SK-N-SH (cell line): ENCODE measurements at regions of chr17 and their contacts with region 1.

Region 1: GRCh38 chr17:58631523-58632323 is 60.1 kb downstream of the TEX14 start:
- DNase-seq: peak; percentile 88
- H3K4me3 ChIP-seq: peak overlapping the region; percentile 43 to 48
- H3K27ac ChIP-seq: peak overlapping the region; percentile 78 to 92
- H3K4me1 ChIP-seq: peaks cover 0 to 5% of the 10 kb centered on the region in 2 experiments; a peak in 1 of 4 replicates
- H3K27me3 ChIP-seq: no peaks in the 10 kb centered on the region
- CTCF ChIP-seq: peak; percentile 41
- EP300 ChIP-seq: peak; percentile 60 to 67; a peak in 3 of 4 replicates
- RAD21 ChIP-seq: peak; percentile 49

Region 2: DNA sequence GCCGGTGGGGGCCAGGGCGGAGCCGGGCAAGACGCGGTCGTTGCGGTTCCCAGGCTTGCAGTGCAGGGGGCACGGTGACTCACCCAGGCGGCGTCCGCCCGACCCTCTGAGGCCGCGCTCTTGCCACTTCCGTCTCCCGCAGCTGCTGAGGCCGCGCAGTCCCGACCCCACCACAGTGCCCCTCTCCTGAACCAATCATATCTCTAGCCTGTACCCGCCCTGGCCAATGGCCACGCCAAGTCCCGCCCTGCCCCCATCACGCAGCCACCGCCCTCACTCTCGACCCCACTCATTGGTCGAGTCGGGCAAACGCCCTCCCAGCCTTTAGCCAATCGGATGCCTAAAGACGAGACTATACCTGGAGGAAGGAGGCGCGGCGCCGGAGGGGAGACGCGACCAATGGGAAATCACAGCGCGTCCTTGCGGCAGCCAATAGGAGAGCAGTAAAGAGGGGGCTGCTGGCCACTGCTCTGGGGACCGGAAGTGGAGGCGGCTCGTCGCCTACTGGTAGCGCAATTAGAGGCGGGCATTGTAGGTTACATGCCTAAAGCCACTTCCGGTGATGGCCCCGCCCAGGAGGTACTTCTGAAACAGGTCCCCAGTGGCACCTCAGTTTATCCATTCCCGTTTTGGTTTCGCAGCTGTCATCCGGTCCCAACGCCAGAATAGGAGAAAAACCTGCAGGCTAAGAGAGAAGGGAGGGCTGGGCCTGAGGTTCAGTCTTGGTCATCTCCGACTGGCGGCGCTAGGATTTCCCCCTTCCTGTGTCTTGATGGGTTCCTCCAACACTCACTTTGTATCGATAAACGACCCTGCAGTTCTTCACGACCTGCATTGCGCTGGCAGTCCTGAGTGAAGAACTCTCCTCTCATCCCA is 113.8 kb before region 1 on chr17:
- CTCF ChIA-PET with region 1: interaction called, 8 read pairs
- POLR2A ChIA-PET with region 1: interaction called, 72 read pairs
- DNase-seq: peak; percentile 96
- H3K4me3 ChIP-seq: peak overlapping the region; percentile 87 to 95
- H3K27ac ChIP-seq: peak overlapping the region; percentile 92 to 97
- H3K4me1 ChIP-seq: peaks cover 5 to 25% of the 10 kb centered on the region in 2 experiments; a peak in 2 of 4 replicates
- H3K27me3 ChIP-seq: no peaks in the 10 kb centered on the region
- CTCF ChIP-seq: no peak
- EP300 ChIP-seq: peak; percentile 18 to 30; a peak in 2 of 4 replicates
- RAD21 ChIP-seq: no peak

Region 3: GRCh38 chr17:58556833-58557250 is 74.9 kb before region 1 on chr17:
- CTCF ChIA-PET with region 1: no interaction called
- POLR2A ChIA-PET with region 1: no interaction called
- DNase-seq: no peak
- H3K4me3 ChIP-seq: no peak overlapping the region
- H3K27ac ChIP-seq: no peak overlapping the region
- H3K4me1 ChIP-seq: no peaks in the 10 kb centered on the region
- H3K27me3 ChIP-seq: no peaks in the 10 kb centered on the region; the same call in 1 of the 2 replicates
- CTCF ChIP-seq: no peak
- EP300 ChIP-seq: no peak
- RAD21 ChIP-seq: no peak

Region 4: GRCh38 chr17:58587702-58588254 is 43.9 kb before region 1 on chr17:
- CTCF ChIA-PET with region 1: interaction called, 25 read pairs
- POLR2A ChIA-PET with region 1: interaction called, 20 read pairs
- DNase-seq: peak; percentile 88
- H3K4me3 ChIP-seq: no peak overlapping the region
- H3K27ac ChIP-seq: no peak overlapping the region
- H3K4me1 ChIP-seq: no peaks in the 10 kb centered on the region; a peak in 1 of 4 replicates
- H3K27me3 ChIP-seq: no peaks in the 10 kb centered on the region
- CTCF ChIP-seq: peak; percentile 99
- EP300 ChIP-seq: no peak
- RAD21 ChIP-seq: peak; percentile 91

Region 5: DNA sequence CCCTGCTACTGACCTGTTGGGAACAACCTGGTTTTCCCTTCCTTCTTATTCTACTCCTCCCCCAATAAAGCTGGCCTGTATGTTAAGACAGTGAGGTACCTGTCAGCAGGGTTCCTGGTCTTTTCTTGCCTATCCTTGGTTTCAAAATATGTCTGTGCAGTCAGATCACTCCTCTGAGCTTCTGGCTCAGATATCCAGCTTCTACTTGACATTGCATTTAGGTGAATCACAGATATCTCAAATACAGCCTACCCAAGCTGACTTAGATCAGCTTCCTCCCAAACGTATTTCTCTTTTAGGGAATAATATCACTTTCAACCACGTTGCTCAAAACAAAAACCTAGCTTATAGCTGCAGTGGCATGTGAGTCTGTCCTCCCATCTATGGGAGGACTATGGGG is 11.4 kb after region 1 on chr17:
- CTCF ChIA-PET with region 1: interaction called, 6 read pairs
- POLR2A ChIA-PET with region 1: interaction called, 15 read pairs
- DNase-seq: no peak
- H3K4me3 ChIP-seq: peak overlapping the region in 1 of 2 experiments; percentile 2; a peak in 1 of 4 replicates
- H3K27ac ChIP-seq: no peak overlapping the region
- H3K4me1 ChIP-seq: no peaks in the 10 kb centered on the region
- H3K27me3 ChIP-seq: no peaks in the 10 kb centered on the region
- CTCF ChIP-seq: no peak
- EP300 ChIP-seq: no peak; a peak in 1 of 4 replicates
- RAD21 ChIP-seq: no peak

Region 6: GRCh38 chr17:58692239-58693055 is 60.7 kb after region 1 on chr17 and contains the start of gene RAD51C:
- CTCF ChIA-PET with region 1: interaction called, 4 read pairs
- POLR2A ChIA-PET with region 1: interaction called, 30 read pairs
- DNase-seq: peak; percentile 95
- H3K4me3 ChIP-seq: peak within 1 kb of the TSS; percentile 68 to 71
- H3K27ac ChIP-seq: peak within 1 kb of the TSS; percentile 41 to 85
- H3K4me1 ChIP-seq: peaks cover 10 to 12% of the 10 kb centered on the region in 2 experiments; a peak in 3 of 4 replicates
- H3K27me3 ChIP-seq: no peaks in the 10 kb centered on the region
- CTCF ChIP-seq: no peak
- EP300 ChIP-seq: no peak
- RAD21 ChIP-seq: no peak
- polyA plus RNA-seq, gene RAD51C: 36.1 and 38.7 TPM in 2 replicates

Region 7: DNA sequence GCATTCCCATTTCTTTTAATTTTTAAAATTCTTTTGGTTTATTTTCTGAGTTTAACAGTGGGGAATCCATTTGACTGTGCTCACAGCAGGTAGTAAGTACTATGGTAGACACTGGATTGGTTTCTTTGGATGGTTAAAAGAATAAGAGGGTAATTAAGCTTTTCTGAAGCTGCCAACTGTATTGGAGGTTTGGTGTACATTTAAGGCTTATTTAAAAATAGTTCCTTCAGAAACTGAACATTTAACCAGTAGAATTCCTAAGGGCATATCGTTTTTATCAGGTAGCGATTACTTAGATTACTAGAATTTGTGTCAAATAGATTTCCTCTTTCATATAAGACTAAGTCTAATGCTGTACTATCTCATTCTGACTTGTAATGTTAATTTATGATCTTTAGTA is 286.3 kb after region 1 on chr17:
- CTCF ChIA-PET with region 1: no interaction called
- POLR2A ChIA-PET with region 1: no interaction called
- DNase-seq: no peak
- H3K4me3 ChIP-seq: no peak overlapping the region
- H3K27ac ChIP-seq: no peak overlapping the region
- H3K4me1 ChIP-seq: no peaks in the 10 kb centered on the region
- H3K27me3 ChIP-seq: no peaks in the 10 kb centered on the region
- CTCF ChIP-seq: no peak
- EP300 ChIP-seq: no peak
- RAD21 ChIP-seq: no peak